ENCODE measurements at regions of chr5 and their contacts with region 1.

Region 1: GRCh38 chr5:138449501-138450239 is 10.8 kb downstream of the REEP2 start:
- DNase-seq: peak; percentile 94
- ATAC-seq: peak; percentile 89
- H3K4me3 Mint-ChIP-seq: peak overlapping the region; percentile 51
- H3K27ac Mint-ChIP-seq: no peak overlapping the region
- H3K4me1 Mint-ChIP-seq: peaks cover 16% of the 10 kb centered on the region
- H3K27me3 Mint-ChIP-seq: no peaks in the 10 kb centered on the region; the same call in 1 of the 2 replicates
- CTCF ChIP-seq: peak; percentile 95

Region 2: DNA sequence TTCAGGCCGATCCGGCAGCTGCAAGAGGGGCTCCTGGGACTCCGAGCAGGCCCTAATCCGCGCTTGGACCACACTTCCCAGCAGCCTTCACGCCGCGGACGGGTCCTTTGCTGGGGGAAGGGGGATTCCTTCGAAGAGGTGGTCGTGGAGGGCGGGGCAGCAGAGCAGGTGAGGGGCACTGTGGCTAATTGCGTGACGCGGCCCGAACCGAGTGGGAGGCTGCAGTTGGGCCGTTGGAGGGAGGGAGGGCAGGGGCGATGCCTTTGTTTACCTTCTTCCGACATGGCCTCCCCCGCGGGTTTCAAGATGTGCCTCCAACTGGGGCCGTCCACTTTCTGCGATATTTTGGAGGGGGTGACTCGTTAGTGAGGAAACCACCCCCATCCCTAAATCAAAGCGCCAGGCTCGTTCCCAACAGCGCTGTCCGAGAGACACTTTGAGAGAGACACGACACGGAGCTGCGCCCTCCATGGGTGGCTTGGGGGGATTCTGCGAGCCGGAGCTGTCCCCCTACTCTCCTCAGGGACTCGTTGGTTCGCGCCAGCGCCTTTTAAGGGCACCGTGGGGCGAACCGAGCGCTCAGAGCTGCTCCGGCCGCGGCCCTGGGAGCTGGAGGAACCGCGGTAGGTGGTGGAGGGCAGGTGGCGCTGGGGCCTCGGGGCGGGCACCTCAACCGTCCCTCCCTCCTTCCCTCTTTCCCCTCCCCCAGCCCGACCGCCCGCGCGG is 111.8 kb before region 1 on chr5 and contains the start of gene FAM53C:
- CTCF ChIA-PET with region 1: no interaction called
- POLR2A ChIA-PET with region 1: no interaction called
- DNase-seq: peak; percentile 90
- ATAC-seq: peak; percentile 83
- H3K4me3 Mint-ChIP-seq: peak within 1 kb of the TSS; percentile 92
- H3K27ac Mint-ChIP-seq: peak within 1 kb of the TSS; percentile 100
- H3K4me1 Mint-ChIP-seq: peaks cover 30% of the 10 kb centered on the region
- H3K27me3 Mint-ChIP-seq: no peaks in the 10 kb centered on the region
- CTCF ChIP-seq: no peak
- total RNA-seq, gene FAM53C: 51.3 to 56.2 TPM (median 53.0 TPM) in 3 replicates

Region 3: GRCh38 chr5:138360941-138361452 is 88.7 kb before region 1 on chr5:
- CTCF ChIA-PET with region 1: no interaction called
- POLR2A ChIA-PET with region 1: no interaction called
- DNase-seq: no peak
- ATAC-seq: no peak
- H3K4me3 Mint-ChIP-seq: no peak overlapping the region
- H3K27ac Mint-ChIP-seq: peak overlapping the region; percentile 69
- H3K4me1 Mint-ChIP-seq: peaks cover 11% of the 10 kb centered on the region
- H3K27me3 Mint-ChIP-seq: no peaks in the 10 kb centered on the region
- CTCF ChIP-seq: no peak

Region 4: GRCh38 chr5:138438724-138439476 is 10.8 kb before region 1 on chr5 and contains the start of gene REEP2:
- CTCF ChIA-PET with region 1: interaction called, 32 read pairs
- POLR2A ChIA-PET with region 1: no interaction called
- DNase-seq: peak; percentile 74
- ATAC-seq: peak; percentile 72
- H3K4me3 Mint-ChIP-seq: peak within 1 kb of the TSS; percentile 85
- H3K27ac Mint-ChIP-seq: peak within 1 kb of the TSS; percentile 8
- H3K4me1 Mint-ChIP-seq: peaks cover 19% of the 10 kb centered on the region
- H3K27me3 Mint-ChIP-seq: no peaks in the 10 kb centered on the region
- CTCF ChIP-seq: no peak
- total RNA-seq, gene REEP2: 47.7 to 51.1 TPM (median 50.9 TPM) in 3 replicates

Region 5: GRCh38 chr5:138464008-138464387 is 14.3 kb after region 1 on chr5:
- CTCF ChIA-PET with region 1: interaction called, 106 read pairs
- POLR2A ChIA-PET with region 1: interaction called, 18 read pairs
- DNase-seq: peak; percentile 92
- ATAC-seq: peak; percentile 61
- H3K4me3 Mint-ChIP-seq: peak overlapping the region; percentile 83
- H3K27ac Mint-ChIP-seq: peak overlapping the region; percentile 94; the same call in 1 of the 2 replicates
- H3K4me1 Mint-ChIP-seq: 0 out of 2 replicates have a peak, but pooled peaks cover 7% of the 10 kb centered on the region
- H3K27me3 Mint-ChIP-seq: peaks cover 34% of the 10 kb centered on the region
- CTCF ChIP-seq: peak; percentile 83